ENCODE measurements at regions of chr16 and their contacts with region 1.

Region 1: GRCh38 chr16:23640931-23641765 is at the starts of genes DCTN5 and PALB2:
- DNase-seq: peak; percentile 86
- ATAC-seq: peak; percentile 99
- H3K4me3 Mint-ChIP-seq: peak within 1 kb of the TSS; percentile 99
- H3K27ac Mint-ChIP-seq: peak within 1 kb of the TSS; percentile 98
- H3K4me1 Mint-ChIP-seq: peaks cover 20% of the 10 kb centered on the region
- H3K27me3 Mint-ChIP-seq: no peaks in the 10 kb centered on the region
- total RNA-seq, gene DCTN5: 83.9 to 89.3 TPM
- total RNA-seq, gene PALB2: 20.2 to 21.3 TPM

Region 2: DNA sequence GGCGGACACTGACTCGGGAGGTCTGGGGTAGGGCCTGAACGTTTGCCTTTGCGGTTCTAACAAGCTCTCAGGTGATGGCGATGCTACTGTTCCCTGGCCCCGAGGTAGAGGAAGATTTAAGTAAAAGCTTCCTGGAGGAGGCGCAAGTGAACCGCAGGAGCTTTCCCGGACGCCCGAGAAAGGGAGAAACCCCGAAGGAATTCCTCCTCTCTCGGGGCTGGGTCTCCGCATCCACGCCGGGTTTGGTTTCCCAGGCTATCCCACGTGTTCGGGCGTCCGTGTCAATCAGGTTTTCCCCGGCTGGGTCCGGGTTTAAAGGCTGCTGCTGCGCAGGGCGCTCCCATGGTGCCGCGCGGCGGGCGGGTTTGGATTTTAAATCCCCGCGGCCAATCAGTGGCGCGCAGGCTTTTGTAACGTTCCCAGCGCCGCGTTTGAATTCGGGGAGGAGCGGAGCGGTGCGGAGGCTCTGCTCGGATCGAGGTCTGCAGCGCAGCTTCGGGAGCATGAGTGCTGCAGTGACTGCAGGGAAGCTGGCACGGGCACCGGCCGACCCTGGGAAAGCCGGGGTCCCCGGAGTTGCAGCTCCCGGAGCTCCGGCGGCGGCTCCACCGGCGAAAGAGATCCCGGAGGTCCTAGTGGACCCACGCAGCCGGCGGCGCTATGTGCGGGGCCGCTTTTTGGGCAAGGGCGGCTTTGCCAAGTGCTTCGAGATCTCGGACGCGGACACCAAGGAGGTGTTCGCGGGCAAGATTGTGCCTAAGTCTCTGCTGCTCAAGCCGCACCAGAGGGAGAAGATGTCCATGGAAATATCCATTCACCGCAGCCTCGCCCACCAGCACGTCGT is 37.5 kb after region 1 on chr16 and contains the start of gene PLK1:
- POLR2A ChIA-PET with region 1: interaction called, 21 read pairs
- DNase-seq: peak; percentile 89
- ATAC-seq: peak; percentile 99
- H3K4me3 Mint-ChIP-seq: peak within 1 kb of the TSS; percentile 98
- H3K27ac Mint-ChIP-seq: peak within 1 kb of the TSS; percentile 85
- H3K4me1 Mint-ChIP-seq: peaks cover 31% of the 10 kb centered on the region
- H3K27me3 Mint-ChIP-seq: no peaks in the 10 kb centered on the region
- total RNA-seq, gene PLK1: 76.5 to 84.8 TPM